ENCODE measurements at regions of chr3 and their contacts with region 1.

Region 1: DNA sequence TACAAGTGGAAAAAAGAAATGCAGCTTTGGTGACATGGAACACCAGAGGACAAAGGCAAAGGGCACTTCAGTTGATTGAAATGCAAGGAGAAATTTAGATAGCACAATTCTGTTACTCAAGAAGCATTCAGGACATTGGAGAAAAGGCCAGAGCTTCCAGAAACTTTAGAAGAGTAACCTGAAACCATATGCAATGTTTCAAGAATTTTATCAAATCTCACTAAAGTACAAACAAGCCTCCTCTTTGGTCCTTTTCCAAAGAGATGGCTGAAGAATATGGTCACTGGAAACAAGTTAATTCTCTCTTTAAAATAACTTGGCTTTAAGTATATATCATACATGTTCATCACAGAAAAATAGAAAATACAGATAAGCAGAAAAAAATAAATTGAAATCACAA is 14.6 kb upstream of the LMOD3 start:
- DNase-seq: no peak
- ATAC-seq: no peak
- H3K4me3 ChIP-seq: no peak overlapping the region
- H3K27ac ChIP-seq: no peak overlapping the region
- H3K4me1 ChIP-seq: peaks cover 0 to under 1% (median 0%) of the 10 kb centered on the region in 12 donors
- H3K27me3 ChIP-seq: no peaks in the 10 kb centered on the region
- CTCF ChIP-seq: no peak
- POLR2A ChIP-seq: no peak

Region 2: DNA sequence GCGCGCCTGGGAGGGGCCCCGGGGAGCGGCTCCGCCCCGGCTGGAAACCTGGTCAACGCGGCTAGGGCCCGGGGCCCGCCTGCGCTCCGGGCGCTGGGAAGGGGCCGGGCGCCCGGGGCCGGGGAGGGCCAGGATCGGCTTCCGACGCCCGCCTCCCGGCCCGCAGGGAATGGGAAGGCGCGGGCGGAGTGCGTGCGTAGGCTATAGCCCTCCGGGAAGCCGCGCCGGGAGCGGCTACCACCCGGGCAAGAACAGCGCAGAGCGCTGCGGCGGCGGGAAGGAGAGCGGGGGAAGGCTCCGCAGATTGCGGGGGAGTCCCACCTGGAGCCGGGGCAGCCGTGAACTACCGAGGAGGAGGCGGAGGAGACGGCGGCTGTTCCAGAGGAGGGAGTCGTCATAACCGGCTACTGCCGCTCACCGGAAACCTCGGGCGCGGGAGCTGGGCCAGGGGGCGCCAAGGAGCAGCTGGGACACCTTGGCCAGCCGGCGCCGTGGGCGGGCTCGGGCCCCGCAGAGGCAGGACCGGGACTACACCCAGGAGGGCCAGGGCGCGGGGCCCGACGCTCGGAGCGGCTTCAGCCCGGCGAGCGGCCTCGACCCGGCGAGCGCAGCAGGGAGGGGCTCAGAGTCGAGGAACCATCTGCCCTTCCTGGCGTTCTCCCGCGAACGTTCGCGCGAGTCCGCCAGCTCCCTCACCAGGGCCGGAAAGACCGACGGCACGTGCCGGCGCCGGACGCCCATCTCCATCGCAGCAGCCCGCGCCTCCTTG is 123.6 kb before region 1 on chr3 and contains the start of gene EOGT:
- intact Hi-C with region 1: no loop called
- DNase-seq: peak; percentile 91 to 95 (median 94)
- ATAC-seq: peak; percentile 71 to 92 (median 90)
- H3K4me3 ChIP-seq: peak within 1 kb of the TSS; percentile 53 to 94 (median 86)
- H3K27ac ChIP-seq: peak within 1 kb of the TSS; percentile 94 to 99 (median 98)
- H3K4me1 ChIP-seq: peaks cover 0 to 47% (median 24%) of the 10 kb centered on the region in 12 donors
- H3K27me3 ChIP-seq: no peaks in the 10 kb centered on the region
- CTCF ChIP-seq: peak; percentile 39 to 84 (median 64)
- POLR2A ChIP-seq: peak in 1 of 2 donors; percentile 52
- total RNA-seq, gene EOGT: 21.5 to 53.1 (median 34.5) TPM

Region 3: DNA sequence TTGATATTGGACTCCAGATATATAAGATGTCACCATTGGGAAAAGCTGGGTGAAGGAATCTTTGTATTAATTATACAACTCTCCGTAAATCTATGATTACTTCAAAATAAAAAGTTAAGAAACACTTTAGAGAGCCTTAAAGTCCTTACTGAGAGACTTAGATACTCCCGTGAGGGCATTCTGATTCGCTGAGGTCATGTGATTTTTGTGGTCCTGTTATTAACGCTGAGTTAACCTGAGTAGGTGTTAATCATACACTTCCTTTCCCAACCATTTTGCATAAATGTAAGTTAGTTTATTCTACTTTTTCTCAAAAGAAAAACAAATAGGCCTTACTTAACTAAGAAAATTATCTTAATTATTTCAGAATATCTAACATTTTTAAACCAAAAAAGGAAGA is 52.5 kb after region 1 on chr3:
- intact Hi-C with region 1: loop called in 1 of 10 experiments (anchors 2 kb)
- DNase-seq: no peak
- ATAC-seq: no peak
- H3K4me3 ChIP-seq: no peak overlapping the region
- H3K27ac ChIP-seq: no peak overlapping the region
- H3K4me1 ChIP-seq: no peaks in the 10 kb centered on the region
- H3K27me3 ChIP-seq: no peaks in the 10 kb centered on the region
- CTCF ChIP-seq: no peak
- POLR2A ChIP-seq: no peak

Region 4: GRCh38 chr3:69200384-69201068 is 63.5 kb after region 1 on chr3:
- intact Hi-C with region 1: no loop called
- DNase-seq: peak in 2 of 5 donors; percentile 18 to 39
- ATAC-seq: peak; percentile 65 to 79 (median 78)
- H3K4me3 ChIP-seq: peak overlapping the region in 10 of 12 donors; percentile 5 to 51 (median 40)
- H3K27ac ChIP-seq: peak overlapping the region in 10 of 12 donors; percentile 8 to 67 (median 52)
- H3K4me1 ChIP-seq: peaks cover 0 to 32% (median 11%) of the 10 kb centered on the region in 12 donors
- H3K27me3 ChIP-seq: no peaks in the 10 kb centered on the region
- CTCF ChIP-seq: no peak
- POLR2A ChIP-seq: no peak